CD4-positive, alpha-beta memory T cell (primary cell): ENCODE measurements at regions of chr5 and their contacts with region 1.

Region 1: GRCh38 chr5:110738812-110739651 is at the start of gene SLC25A46:
- DNase-seq: peak; percentile 91 to 93 (median 92)
- H3K4me3 ChIP-seq: peak within 1 kb of the TSS; percentile 74 to 86
- H3K4me3 Mint-ChIP-seq: peak within 1 kb of the TSS; percentile 94 to 99 (median 98)
- H3K27ac ChIP-seq: peak within 1 kb of the TSS; percentile 88
- H3K27ac Mint-ChIP-seq: peak within 1 kb of the TSS; percentile 96 to 100 (median 99)
- H3K4me1 ChIP-seq: peaks cover 32% of the 10 kb centered on the region
- H3K4me1 Mint-ChIP-seq: peaks cover 21 to 44% (median 31%) of the 10 kb centered on the region in 4 donors
- H3K27me3 ChIP-seq: no peaks in the 10 kb centered on the region
- H3K27me3 Mint-ChIP-seq: peaks cover 5 to 7% of the 10 kb centered on the region in 2 donors
- total RNA-seq, gene SLC25A46: 38.1 TPM

Region 2: GRCh38 chr5:108748401-108749127 is 1990.5 kb before region 1 on chr5:
- CTCF ChIA-PET with region 1: no interaction called
- POLR2A ChIA-PET with region 1: no interaction called
- intact Hi-C with region 1: loop called (anchors 2 kb)
- DNase-seq: peak; percentile 97 to 99 (median 98)
- H3K4me3 ChIP-seq: peak overlapping the region; percentile 82 to 87
- H3K4me3 Mint-ChIP-seq: peak overlapping the region; percentile 91 to 94 (median 92)
- H3K27ac ChIP-seq: peak overlapping the region; percentile 86
- H3K27ac Mint-ChIP-seq: peak overlapping the region; percentile 88 to 98 (median 97)
- H3K4me1 ChIP-seq: peaks cover 19% of the 10 kb centered on the region
- H3K4me1 Mint-ChIP-seq: peaks cover 7 to 20% (median 12%) of the 10 kb centered on the region in 4 donors
- H3K27me3 ChIP-seq: no peaks in the 10 kb centered on the region
- H3K27me3 Mint-ChIP-seq: peaks cover 0 to 5% of the 10 kb centered on the region in 2 donors

Region 3: DNA sequence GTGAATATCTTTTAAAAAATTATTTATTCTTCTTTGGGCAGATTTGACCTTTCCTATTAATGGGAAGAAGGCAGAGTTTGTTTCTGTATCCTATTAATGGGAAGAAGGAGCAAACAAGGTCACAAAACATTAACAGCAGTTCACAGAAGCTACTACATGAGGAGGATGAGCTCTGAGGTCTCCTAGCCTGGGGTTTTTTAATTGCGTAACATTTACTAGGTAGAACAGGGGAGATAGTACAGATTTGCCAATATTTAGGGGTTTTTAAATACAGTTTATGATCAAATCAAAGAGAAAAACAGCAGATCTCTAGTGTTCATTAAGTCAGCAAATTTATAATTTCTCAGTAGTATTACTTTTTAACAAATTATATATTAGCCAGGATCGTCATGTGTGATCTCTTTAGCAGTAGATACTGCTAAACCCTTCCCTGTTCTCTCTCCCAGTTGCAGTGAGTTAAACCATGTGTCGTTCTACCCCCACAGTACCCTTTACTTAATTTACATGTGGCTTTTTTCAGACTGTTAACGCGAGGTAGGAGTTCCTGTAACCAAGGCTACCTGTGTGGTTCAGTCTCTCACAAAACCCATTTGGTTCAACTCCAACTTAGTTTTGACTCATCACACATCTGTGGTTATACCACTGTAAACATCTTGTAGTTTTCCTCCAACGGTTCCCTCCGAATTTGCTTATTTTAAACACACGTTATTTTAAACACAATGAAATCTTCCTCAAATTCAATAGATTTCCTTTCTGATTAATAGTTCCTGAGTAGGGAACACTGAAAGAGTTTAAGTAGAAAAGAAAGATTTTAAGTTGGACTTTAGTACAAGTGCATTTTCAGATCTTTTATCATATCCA is 13.1 kb after region 1 on chr5:
- CTCF ChIA-PET with region 1: interaction called, 24 read pairs
- POLR2A ChIA-PET with region 1: interaction called, 21 read pairs
- intact Hi-C with region 1: loop called (anchors 1 kb)
- DNase-seq: peak; percentile 45 to 74 (median 47)
- H3K4me3 ChIP-seq: no peak overlapping the region
- H3K4me3 Mint-ChIP-seq: peak overlapping the region in 7 of 8 donors; percentile 8 to 74 (median 52)
- H3K27ac ChIP-seq: peak overlapping the region; percentile 54
- H3K27ac Mint-ChIP-seq: peak overlapping the region; percentile 76 to 93 (median 90)
- H3K4me1 ChIP-seq: peaks cover 38% of the 10 kb centered on the region
- H3K4me1 Mint-ChIP-seq: peaks cover 38 to 54% (median 46%) of the 10 kb centered on the region in 4 donors
- H3K27me3 ChIP-seq: no peaks in the 10 kb centered on the region
- H3K27me3 Mint-ChIP-seq: no peaks in the 10 kb centered on the region

Region 4: GRCh38 chr5:111092062-111092853 is 353.2 kb after region 1 on chr5 and contains the start of gene WDR36:
- CTCF ChIA-PET with region 1: interaction called, 4 read pairs
- POLR2A ChIA-PET with region 1: interaction called, 4 read pairs
- intact Hi-C with region 1: loop called (anchors 2 kb)
- DNase-seq: peak; percentile 85 to 91 (median 87)
- H3K4me3 ChIP-seq: peak within 1 kb of the TSS; percentile 82 to 90
- H3K4me3 Mint-ChIP-seq: peak within 1 kb of the TSS; percentile 90 to 98 (median 97)
- H3K27ac ChIP-seq: peak within 1 kb of the TSS; percentile 73
- H3K27ac Mint-ChIP-seq: peak within 1 kb of the TSS; percentile 83 to 98 (median 96)
- H3K4me1 ChIP-seq: peaks cover 25% of the 10 kb centered on the region
- H3K4me1 Mint-ChIP-seq: peaks cover 15 to 34% (median 27%) of the 10 kb centered on the region in 4 donors
- H3K27me3 ChIP-seq: no peaks in the 10 kb centered on the region
- H3K27me3 Mint-ChIP-seq: peaks cover 1 to 7% of the 10 kb centered on the region in 2 donors
- total RNA-seq, gene WDR36: 26.3 to 27.6 TPM

Region 5: GRCh38 chr5:111198281-111198966 is 459.4 kb after region 1 on chr5:
- CTCF ChIA-PET with region 1: no interaction called
- POLR2A ChIA-PET with region 1: no interaction called
- intact Hi-C with region 1: no loop called
- DNase-seq: no peak
- H3K4me3 ChIP-seq: no peak overlapping the region
- H3K4me3 Mint-ChIP-seq: no peak overlapping the region
- H3K27ac ChIP-seq: no peak overlapping the region
- H3K27ac Mint-ChIP-seq: no peak overlapping the region
- H3K4me1 ChIP-seq: no peaks in the 10 kb centered on the region
- H3K4me1 Mint-ChIP-seq: peaks cover 4 to 7% (median 5%) of the 10 kb centered on the region in 4 donors
- H3K27me3 ChIP-seq: no peaks in the 10 kb centered on the region
- H3K27me3 Mint-ChIP-seq: peaks cover 3 to 9% of the 10 kb centered on the region in 2 donors

Region 6: GRCh38 chr5:112160652-112161391 is 1421.8 kb after region 1 on chr5:
- CTCF ChIA-PET with region 1: interaction called, 5 read pairs
- POLR2A ChIA-PET with region 1: no interaction called
- intact Hi-C with region 1: loop called (anchors 5 kb)
- DNase-seq: peak; percentile 86 to 94 (median 91)
- H3K4me3 ChIP-seq: peak overlapping the region; percentile 78 to 89
- H3K4me3 Mint-ChIP-seq: peak overlapping the region; percentile 92 to 97 (median 96)
- H3K27ac ChIP-seq: peak overlapping the region; percentile 71
- H3K27ac Mint-ChIP-seq: peak overlapping the region; percentile 69 to 93 (median 91)
- H3K4me1 ChIP-seq: peaks cover 23% of the 10 kb centered on the region
- H3K4me1 Mint-ChIP-seq: peaks cover 14 to 38% (median 26%) of the 10 kb centered on the region in 4 donors
- H3K27me3 ChIP-seq: no peaks in the 10 kb centered on the region
- H3K27me3 Mint-ChIP-seq: no peaks in the 10 kb centered on the region